HepG2 (cell line): ENCODE measurements at regions of chr14 and their contacts with region 1.

Region 1: DNA sequence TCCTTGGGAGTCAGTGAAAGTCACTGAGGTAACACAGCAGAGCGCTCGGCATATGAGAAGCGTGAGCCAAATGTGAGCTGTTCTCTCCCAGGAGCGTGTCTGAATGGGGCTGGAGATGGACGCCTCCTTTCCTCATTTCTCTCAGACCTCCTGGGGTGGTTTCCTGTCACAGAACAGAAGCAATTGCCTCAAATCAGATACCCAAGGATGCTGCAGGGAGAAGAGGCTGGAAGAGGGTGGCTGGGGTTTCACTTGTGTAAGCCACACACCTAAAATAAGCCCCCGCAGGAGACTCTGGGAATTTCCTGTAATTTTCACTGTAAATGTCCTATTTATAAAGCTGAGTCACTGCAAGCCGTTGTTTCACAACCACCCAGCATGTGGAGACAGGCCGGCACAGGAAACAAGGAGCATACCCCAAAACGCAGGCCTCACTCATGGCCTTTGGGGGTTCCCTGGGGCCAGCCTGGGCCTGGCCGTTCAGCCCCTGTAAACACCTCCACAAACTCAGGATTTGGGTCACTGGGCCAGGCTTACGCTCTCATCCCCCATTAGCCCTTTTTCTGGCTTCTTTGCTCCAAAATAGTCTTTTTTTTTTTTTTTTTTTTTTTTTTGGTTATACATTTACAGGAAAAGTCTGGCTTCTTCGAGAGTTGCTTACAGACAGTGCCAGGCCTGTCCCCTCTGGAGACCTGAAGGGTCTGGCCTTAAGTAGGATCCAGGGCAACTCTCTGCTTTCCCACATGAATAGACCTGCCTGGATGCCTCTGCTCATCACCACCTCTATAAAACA is 55.3 kb downstream of the VCPKMT start:
- DNase-seq: peak; percentile 89
- ATAC-seq: peak; percentile 71
- H3K4me3 ChIP-seq: peak overlapping the region; percentile 63 to 76 (median 64)
- H3K27ac ChIP-seq: peak overlapping the region; percentile 88
- H3K4me1 ChIP-seq: peaks cover 54% of the 10 kb centered on the region
- H3K27me3 ChIP-seq: no peaks in the 10 kb centered on the region
- CTCF ChIP-seq: 0 out of 2 replicates have a peak, but pooled peaks have one; percentile 3
- EP300 ChIP-seq: peak in 1 of 2 experiments; percentile 66; a peak in 2 of 4 replicates
- POLR2A ChIP-seq: peak in 1 of 2 experiments; percentile 45; a peak in 1 of 4 replicates
- RAD21 ChIP-seq: no peak; the same call in 1 of the 2 replicates

Region 2: DNA sequence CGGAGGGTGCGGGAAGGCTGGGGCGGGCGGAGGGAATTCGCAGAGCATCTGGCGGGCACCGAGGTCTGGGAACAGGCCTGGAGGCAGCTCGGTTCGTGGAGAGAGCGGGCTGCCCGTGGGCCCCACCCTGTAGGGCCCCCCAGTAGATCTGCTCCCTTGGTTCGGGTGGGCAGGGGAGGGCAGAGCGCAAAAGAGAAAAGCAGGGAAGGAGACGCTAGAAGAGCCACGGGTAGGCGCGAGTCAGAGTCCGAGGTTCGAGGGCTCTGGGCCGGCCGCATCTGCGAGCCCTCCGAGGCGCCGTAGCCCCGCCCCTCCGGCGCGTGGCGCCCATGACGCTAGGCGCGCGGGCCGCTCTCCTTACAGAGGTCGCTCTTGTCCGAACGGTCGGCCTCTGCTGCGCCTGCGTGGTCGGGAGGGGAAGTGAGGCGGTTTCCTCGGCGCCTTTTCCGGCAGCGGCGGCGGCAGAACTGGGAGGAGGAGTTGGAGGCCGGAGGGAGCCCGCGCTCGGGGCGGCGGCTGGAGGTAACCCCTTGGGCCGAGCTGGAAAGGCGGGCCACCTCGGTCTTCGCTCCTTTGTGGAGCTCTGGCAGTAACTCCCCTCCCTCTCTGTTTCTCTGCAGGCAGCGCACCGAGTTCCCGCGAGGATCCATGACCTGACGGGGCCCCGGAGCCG is 168.3 kb before region 1 on chr14 and contains the start of gene ARF6:
- CTCF ChIA-PET with region 1: no interaction called
- POLR2A ChIA-PET with region 1: interaction called, 27 read pairs
- in situ Hi-C with region 1: no loop called
- intact Hi-C with region 1: loop called (anchors 5 kb)
- DNase-seq: peak; percentile 93
- ATAC-seq: peak; percentile 93
- H3K4me3 ChIP-seq: peak within 1 kb of the TSS; percentile 95 to 99 (median 97)
- H3K27ac ChIP-seq: peak within 1 kb of the TSS; percentile 98
- H3K4me1 ChIP-seq: peaks cover 29% of the 10 kb centered on the region
- H3K27me3 ChIP-seq: no peaks in the 10 kb centered on the region
- CTCF ChIP-seq: peak; percentile 64
- EP300 ChIP-seq: peak in 1 of 2 experiments; percentile 17; a peak in 1 of 4 replicates
- POLR2A ChIP-seq: peak; percentile 95 to 96
- RAD21 ChIP-seq: peak; percentile 57; the same call in 1 of the 2 replicates
- total RNA-seq, gene ARF6: 31.9 and 36.1 TPM in 2 replicates

Region 3: GRCh38 chr14:49971156-49972130 is 89.6 kb before region 1 on chr14:
- CTCF ChIA-PET with region 1: no interaction called
- POLR2A ChIA-PET with region 1: interaction called, 28 read pairs
- in situ Hi-C with region 1: no loop called
- intact Hi-C with region 1: no loop called
- DNase-seq: no peak
- ATAC-seq: no peak
- H3K4me3 ChIP-seq: no peak overlapping the region
- H3K27ac ChIP-seq: no peak overlapping the region
- H3K4me1 ChIP-seq: peaks cover 79% of the 10 kb centered on the region
- H3K27me3 ChIP-seq: no peaks in the 10 kb centered on the region
- CTCF ChIP-seq: no peak
- EP300 ChIP-seq: no peak
- POLR2A ChIP-seq: no peak
- RAD21 ChIP-seq: no peak

Region 4: DNA sequence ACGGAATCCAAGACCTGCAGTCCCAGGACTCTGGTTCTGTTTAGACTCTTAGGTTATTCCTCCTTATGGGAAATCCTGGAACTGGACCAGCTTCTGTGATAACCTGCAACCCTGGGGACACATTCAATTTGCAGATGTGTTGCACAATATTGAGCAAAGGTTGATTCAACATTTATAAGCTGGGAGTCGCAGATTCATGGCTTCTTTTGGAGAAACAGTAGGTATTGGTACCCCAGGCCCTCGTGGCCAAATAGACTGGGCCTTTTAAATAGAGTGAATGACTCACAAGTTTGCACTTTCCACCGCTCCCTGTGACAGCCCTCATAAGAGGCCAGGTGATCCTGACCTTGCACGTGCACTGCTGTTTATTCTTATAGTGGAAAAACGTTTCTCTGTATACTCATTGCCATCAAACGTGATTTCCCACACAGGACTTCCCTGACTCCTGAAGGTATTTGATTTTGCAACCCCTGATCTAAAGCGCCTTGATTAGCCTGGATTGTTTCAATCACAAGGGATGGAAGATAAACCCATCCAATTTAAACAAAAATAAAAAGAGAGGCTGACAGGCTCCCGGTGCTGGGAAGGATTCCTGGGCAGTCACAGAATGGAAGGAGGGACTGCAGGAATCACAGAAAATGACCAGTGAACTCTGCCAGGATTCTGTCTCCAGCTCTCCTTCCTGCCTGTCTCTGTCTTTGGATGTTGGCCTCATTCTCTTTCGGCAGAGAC is 42.7 kb before region 1 on chr14:
- CTCF ChIA-PET with region 1: no interaction called
- POLR2A ChIA-PET with region 1: interaction called, 9 read pairs
- in situ Hi-C with region 1: no loop called
- intact Hi-C with region 1: loop called (anchors 5 kb)
- DNase-seq: peak; percentile 83
- ATAC-seq: peak; percentile 90
- H3K4me3 ChIP-seq: peak overlapping the region in 2 of 3 experiments; percentile 3 to 17; a peak in 3 of 6 replicates
- H3K27ac ChIP-seq: no peak overlapping the region
- H3K4me1 ChIP-seq: peaks cover 50% of the 10 kb centered on the region
- H3K27me3 ChIP-seq: no peaks in the 10 kb centered on the region; a peak in 1 of 5 replicates
- CTCF ChIP-seq: no peak
- EP300 ChIP-seq: 0 out of 4 replicates have a peak, but pooled peaks of 1 of the 2 experiments have one; percentile 53
- POLR2A ChIP-seq: no peak
- RAD21 ChIP-seq: no peak

Region 5: DNA sequence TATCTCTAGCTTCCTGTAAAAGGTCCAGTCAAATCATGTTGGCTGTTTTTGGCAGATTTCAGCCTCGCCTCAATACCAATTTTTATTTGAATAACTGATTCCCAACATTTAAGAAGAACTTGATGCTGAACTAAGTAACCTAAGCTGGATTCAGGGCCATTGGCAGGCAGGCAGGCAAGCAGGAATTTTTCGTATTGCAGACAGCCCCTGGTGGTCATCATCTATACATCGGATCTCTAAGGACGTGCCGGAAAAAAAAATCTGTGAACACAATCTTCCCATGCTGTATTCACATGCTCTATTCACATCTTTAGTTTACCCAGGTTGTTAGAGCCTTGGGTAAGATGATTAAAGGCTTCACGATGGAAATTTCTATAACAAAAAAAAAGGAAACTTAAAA is 48.3 kb after region 1 on chr14:
- CTCF ChIA-PET with region 1: no interaction called
- POLR2A ChIA-PET with region 1: interaction called, 3 read pairs
- in situ Hi-C with region 1: no loop called
- intact Hi-C with region 1: loop called (anchors 5 kb)
- DNase-seq: peak; percentile 23
- ATAC-seq: peak; percentile 65
- H3K4me3 ChIP-seq: no peak overlapping the region
- H3K27ac ChIP-seq: no peak overlapping the region
- H3K4me1 ChIP-seq: peaks cover 1% of the 10 kb centered on the region
- H3K27me3 ChIP-seq: no peaks in the 10 kb centered on the region
- CTCF ChIP-seq: no peak
- EP300 ChIP-seq: no peak
- POLR2A ChIP-seq: no peak
- RAD21 ChIP-seq: no peak

Region 6: DNA sequence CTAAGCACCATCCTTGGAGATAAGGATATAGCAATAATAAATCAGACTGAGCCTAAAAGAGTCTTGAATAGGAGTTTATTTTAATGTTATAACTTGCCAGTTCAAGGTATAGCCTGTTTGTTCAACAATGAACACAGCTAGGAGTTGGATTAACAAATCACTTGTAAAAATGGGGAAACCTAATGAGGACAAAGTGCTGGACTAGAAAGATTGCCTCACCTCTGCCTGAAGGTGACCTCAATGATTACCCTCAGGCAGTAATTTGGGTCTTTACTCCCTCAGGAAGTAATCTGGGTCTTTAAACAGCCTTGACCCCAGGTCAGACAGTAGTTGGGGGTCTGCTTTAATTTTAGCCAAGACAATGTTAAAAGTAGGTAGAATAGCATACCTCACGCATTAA is 371.1 kb after region 1 on chr14:
- CTCF ChIA-PET with region 1: no interaction called
- POLR2A ChIA-PET with region 1: no interaction called
- in situ Hi-C with region 1: no loop called
- intact Hi-C with region 1: no loop called
- DNase-seq: no peak
- ATAC-seq: no peak
- H3K4me3 ChIP-seq: no peak overlapping the region
- H3K27ac ChIP-seq: no peak overlapping the region
- H3K4me1 ChIP-seq: 0 out of 2 replicates have a peak, but pooled peaks cover 5% of the 10 kb centered on the region
- H3K27me3 ChIP-seq: no peaks in the 10 kb centered on the region
- CTCF ChIP-seq: no peak
- EP300 ChIP-seq: no peak
- POLR2A ChIP-seq: no peak
- RAD21 ChIP-seq: no peak

Region 7: GRCh38 chr14:51527073-51527472 is 1466.0 kb after region 1 on chr14:
- CTCF ChIA-PET with region 1: no interaction called
- POLR2A ChIA-PET with region 1: no interaction called
- in situ Hi-C with region 1: no loop called
- intact Hi-C with region 1: no loop called
- DNase-seq: no peak
- ATAC-seq: no peak
- H3K4me3 ChIP-seq: no peak overlapping the region
- H3K27ac ChIP-seq: no peak overlapping the region
- H3K4me1 ChIP-seq: peaks cover 15% of the 10 kb centered on the region
- H3K27me3 ChIP-seq: no peaks in the 10 kb centered on the region
- CTCF ChIP-seq: no peak
- EP300 ChIP-seq: no peak
- POLR2A ChIP-seq: no peak
- RAD21 ChIP-seq: no peak